Vagina (tissue), 2 donors: ENCODE measurements at regions of chr6 and their contacts with region 1.

Region 1: DNA sequence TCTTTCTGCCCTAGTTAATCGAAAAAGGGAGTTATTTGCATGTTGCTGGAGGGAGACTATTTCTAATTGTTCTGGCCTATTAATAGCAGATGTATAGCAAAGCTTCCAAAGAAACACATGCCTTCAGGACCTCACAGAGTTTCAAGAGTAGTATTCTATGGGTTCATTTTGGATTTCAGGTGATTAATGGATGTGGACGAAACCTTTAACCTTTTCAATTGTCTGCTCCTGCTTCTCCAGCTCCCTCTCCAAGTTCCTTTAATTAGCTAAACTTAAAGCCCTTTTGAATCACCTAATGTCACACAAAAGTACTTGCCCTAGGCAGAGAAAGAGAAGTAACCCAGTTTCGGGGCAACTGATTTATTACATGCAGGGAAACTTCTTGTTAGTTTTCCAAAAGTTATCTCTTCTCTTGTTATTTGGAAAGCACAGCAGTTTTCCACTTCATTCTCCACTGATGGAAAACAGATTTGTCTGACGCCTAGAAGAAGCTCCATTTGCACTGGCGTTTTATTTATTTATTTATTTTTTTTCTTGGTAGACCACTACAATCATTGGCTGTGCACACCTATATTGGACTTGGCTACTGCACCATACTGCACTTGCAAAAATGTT is 407.7 kb upstream of the JARID2 start:
- DNase-seq: no peak
- H3K4me3 ChIP-seq: no peak overlapping the region
- H3K27ac ChIP-seq: no peak overlapping the region
- H3K4me1 ChIP-seq: peaks cover 11% of the 10 kb centered on the region
- H3K27me3 ChIP-seq: no peaks in the 10 kb centered on the region
- CTCF ChIP-seq: no peak
- POLR2A ChIP-seq: no peak

Region 2: GRCh38 chr6:15854826-15855710 is 1016.9 kb after region 1 on chr6:
- intact Hi-C with region 1: loop called (anchors 5 kb)
- DNase-seq: no peak
- H3K4me3 ChIP-seq: no peak overlapping the region
- H3K27ac ChIP-seq: no peak overlapping the region
- H3K4me1 ChIP-seq: no peaks in the 10 kb centered on the region
- H3K27me3 ChIP-seq: no peaks in the 10 kb centered on the region
- CTCF ChIP-seq: no peak
- POLR2A ChIP-seq: no peak